Panc1 (cell line): ENCODE measurements at regions of chr20 and their contacts with region 1.

Region 1: GRCh38 chr20:19909725-19910124 is 107.4 kb upstream of the NAA20 start:
- DNase-seq: no peak
- ATAC-seq: no peak
- H3K4me3 ChIP-seq: no peak overlapping the region
- H3K27ac ChIP-seq: peak overlapping the region; percentile 4; the same call in 1 of the 2 replicates
- H3K4me1 ChIP-seq: peaks cover 11% of the 10 kb centered on the region
- H3K27me3 ChIP-seq: no peaks in the 10 kb centered on the region
- CTCF ChIP-seq: no peak

Region 2: GRCh38 chr20:17985388-17986018 is 1924.2 kb before region 1 on chr20:
- CTCF ChIA-PET with region 1: no interaction called
- POLR2A ChIA-PET with region 1: no interaction called
- in situ Hi-C with region 1: no loop called
- intact Hi-C with region 1: no loop called
- DNase-seq: no peak
- ATAC-seq: no peak
- H3K4me3 ChIP-seq: no peak overlapping the region
- H3K27ac ChIP-seq: no peak overlapping the region
- H3K4me1 ChIP-seq: no peaks in the 10 kb centered on the region
- H3K27me3 ChIP-seq: no peaks in the 10 kb centered on the region
- CTCF ChIP-seq: no peak

Region 3: GRCh38 chr20:18056174-18057100 is 1853.3 kb before region 1 on chr20:
- CTCF ChIA-PET with region 1: no interaction called
- POLR2A ChIA-PET with region 1: no interaction called
- in situ Hi-C with region 1: no loop called
- intact Hi-C with region 1: no loop called
- DNase-seq: no peak
- ATAC-seq: peak; percentile 67
- H3K4me3 ChIP-seq: peak overlapping the region; percentile 46 to 55
- H3K27ac ChIP-seq: no peak overlapping the region
- H3K4me1 ChIP-seq: peaks cover 9% of the 10 kb centered on the region
- H3K27me3 ChIP-seq: peaks cover 25% of the 10 kb centered on the region
- CTCF ChIP-seq: no peak

Region 4: DNA sequence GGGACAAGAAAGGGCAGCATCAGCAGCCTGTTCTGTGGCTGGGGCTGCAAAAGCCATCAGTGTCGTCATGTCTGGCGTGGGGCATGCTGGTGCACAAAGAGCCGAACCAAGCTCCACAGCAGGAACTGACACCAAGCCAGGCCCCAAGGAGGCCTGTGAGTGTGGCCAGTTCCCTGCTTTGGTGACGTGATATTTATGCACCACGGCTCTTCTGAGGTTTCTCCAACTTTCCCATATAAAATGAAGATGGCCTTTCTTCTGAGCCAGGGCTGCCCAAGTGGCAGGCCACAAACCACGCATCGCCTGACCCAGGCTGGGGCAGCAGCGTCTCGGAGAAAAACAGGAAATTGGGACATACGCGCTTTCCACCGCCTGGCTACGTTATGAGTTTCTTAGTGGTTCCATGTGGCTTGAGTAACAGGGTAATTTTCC is 41.8 kb before region 1 on chr20:
- CTCF ChIA-PET with region 1: no interaction called
- POLR2A ChIA-PET with region 1: no interaction called
- in situ Hi-C with region 1: no loop called
- intact Hi-C with region 1: no loop called
- DNase-seq: no peak
- ATAC-seq: no peak
- H3K4me3 ChIP-seq: no peak overlapping the region
- H3K27ac ChIP-seq: no peak overlapping the region; the same call in 1 of the 2 replicates
- H3K4me1 ChIP-seq: peaks cover 9% of the 10 kb centered on the region
- H3K27me3 ChIP-seq: no peaks in the 10 kb centered on the region
- CTCF ChIP-seq: no peak

Region 5: GRCh38 chr20:19934792-19935491 is 25.2 kb after region 1 on chr20:
- CTCF ChIA-PET with region 1: no interaction called
- POLR2A ChIA-PET with region 1: no interaction called
- in situ Hi-C with region 1: no loop called
- intact Hi-C with region 1: no loop called
- DNase-seq: no peak
- ATAC-seq: no peak
- H3K4me3 ChIP-seq: no peak overlapping the region
- H3K27ac ChIP-seq: no peak overlapping the region
- H3K4me1 ChIP-seq: peaks cover 4% of the 10 kb centered on the region; the same call in 1 of the 2 replicates
- H3K27me3 ChIP-seq: no peaks in the 10 kb centered on the region
- CTCF ChIP-seq: no peak

Region 6: DNA sequence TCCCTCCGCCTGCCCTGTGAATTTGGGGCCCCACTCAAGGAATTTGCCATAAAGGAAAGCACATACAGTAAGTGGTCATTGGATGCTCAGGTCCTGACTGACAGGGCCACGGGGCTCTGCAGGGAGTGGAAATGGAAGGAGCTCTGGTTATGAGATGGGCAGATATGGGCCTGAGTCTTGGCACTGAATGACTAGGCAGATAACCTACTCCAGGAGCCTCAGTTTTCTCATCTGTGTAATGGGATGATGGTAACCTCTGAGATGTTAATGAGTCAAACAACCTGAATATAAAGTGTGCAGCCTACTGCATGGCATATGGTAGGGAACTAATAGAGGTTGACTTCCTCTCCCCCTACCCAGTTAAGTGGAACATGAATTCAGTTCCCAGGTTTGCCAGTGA is 51.0 kb after region 1 on chr20:
- CTCF ChIA-PET with region 1: interaction called, 12 read pairs
- POLR2A ChIA-PET with region 1: no interaction called
- in situ Hi-C with region 1: no loop called
- intact Hi-C with region 1: no loop called
- DNase-seq: no peak
- ATAC-seq: no peak
- H3K4me3 ChIP-seq: no peak overlapping the region
- H3K27ac ChIP-seq: no peak overlapping the region
- H3K4me1 ChIP-seq: peaks cover 4% of the 10 kb centered on the region
- H3K27me3 ChIP-seq: no peaks in the 10 kb centered on the region
- CTCF ChIP-seq: no peak